HepG2 (cell line): ENCODE measurements at regions of chr18 and their contacts with region 1.

Region 1: GRCh38 chr18:24118750-24119577 is 19.9 kb upstream of the CABYR start:
- DNase-seq: peak; percentile 70
- ATAC-seq: peak; percentile 68
- H3K4me3 ChIP-seq: no peak overlapping the region
- H3K27ac ChIP-seq: no peak overlapping the region
- H3K4me1 ChIP-seq: peaks cover 24% of the 10 kb centered on the region
- H3K27me3 ChIP-seq: no peaks in the 10 kb centered on the region
- CTCF ChIP-seq: peak; percentile 84
- EP300 ChIP-seq: no peak
- POLR2A ChIP-seq: no peak
- RAD21 ChIP-seq: peak; percentile 81

Region 2: DNA sequence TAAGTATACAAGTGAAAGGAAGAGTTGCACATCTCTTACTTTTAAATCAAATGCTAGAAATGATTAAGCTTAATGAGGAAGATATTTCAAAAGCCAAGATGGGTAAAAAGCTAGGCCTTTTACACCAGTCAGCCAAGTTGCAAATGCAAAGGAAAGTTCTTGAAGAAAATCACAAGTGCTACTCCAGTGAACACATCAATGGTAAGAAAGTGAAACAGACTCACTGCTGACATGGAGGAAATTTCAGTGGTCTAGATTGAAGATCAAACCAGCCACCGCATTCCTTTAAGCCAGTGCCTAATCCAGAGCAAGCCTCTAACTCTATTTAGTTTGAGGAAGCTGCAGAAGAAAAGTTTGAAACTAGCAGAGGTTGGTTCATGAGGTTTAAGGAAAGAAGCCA is 1106.7 kb before region 1 on chr18:
- CTCF ChIA-PET with region 1: no interaction called
- POLR2A ChIA-PET with region 1: no interaction called
- in situ Hi-C with region 1: no loop called
- intact Hi-C with region 1: no loop called
- DNase-seq: no peak
- ATAC-seq: no peak
- H3K4me3 ChIP-seq: no peak overlapping the region
- H3K27ac ChIP-seq: no peak overlapping the region
- H3K4me1 ChIP-seq: no peaks in the 10 kb centered on the region
- H3K27me3 ChIP-seq: no peaks in the 10 kb centered on the region; a peak in 1 of 5 replicates
- CTCF ChIP-seq: no peak
- EP300 ChIP-seq: no peak
- POLR2A ChIP-seq: no peak
- RAD21 ChIP-seq: no peak

Region 3: DNA sequence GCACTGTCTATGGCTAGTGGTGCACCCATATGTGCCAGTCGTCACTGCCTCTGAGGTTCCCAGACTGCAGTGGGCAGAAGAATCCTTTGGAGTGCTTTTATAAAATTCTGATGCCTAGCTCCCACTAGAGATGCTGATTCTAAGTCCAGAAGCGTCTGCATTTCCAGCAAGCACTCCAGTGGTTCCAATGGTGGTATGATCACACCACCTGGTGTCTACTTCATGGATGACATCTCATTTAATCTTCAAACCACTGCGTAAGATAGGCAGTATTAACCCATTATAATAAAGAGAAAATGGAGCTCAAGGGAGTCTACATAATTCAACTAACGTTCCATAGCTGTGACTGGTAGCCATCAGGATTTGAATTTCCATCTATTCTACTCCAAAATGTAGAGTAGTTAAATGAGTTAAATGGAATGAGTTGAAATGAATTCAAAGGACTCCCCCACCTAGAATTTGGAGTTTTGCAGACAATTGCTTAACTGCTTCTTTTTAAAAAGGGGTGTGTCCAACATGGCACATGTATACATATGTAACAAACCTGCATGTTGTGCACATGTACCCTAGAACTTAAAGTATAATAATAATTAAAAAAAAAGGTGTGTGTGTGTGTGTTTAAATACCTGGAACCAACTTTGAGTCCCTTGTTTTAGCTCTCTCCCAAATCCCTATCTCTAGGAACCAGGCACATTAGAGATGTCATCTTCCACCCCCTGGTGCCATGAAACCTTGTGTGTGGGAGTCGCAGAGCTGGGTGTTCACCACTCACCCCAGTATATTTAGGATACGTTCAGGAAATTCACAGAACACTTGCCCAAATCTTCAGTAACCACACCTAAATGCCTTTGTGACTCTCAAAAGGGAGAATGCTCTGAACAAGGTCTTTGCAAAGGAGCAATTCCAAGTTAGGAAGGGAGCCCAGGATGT is 415.6 kb before region 1 on chr18:
- CTCF ChIA-PET with region 1: no interaction called
- POLR2A ChIA-PET with region 1: no interaction called
- in situ Hi-C with region 1: no loop called
- intact Hi-C with region 1: loop called (anchors 5 kb)
- DNase-seq: peak; percentile 50
- ATAC-seq: peak; percentile 89
- H3K4me3 ChIP-seq: no peak overlapping the region
- H3K27ac ChIP-seq: no peak overlapping the region
- H3K4me1 ChIP-seq: no peaks in the 10 kb centered on the region
- H3K27me3 ChIP-seq: peaks cover 2 to 7% of the 10 kb centered on the region in 2 experiments; a peak in 3 of 5 replicates
- CTCF ChIP-seq: peak; percentile 75
- EP300 ChIP-seq: no peak
- POLR2A ChIP-seq: no peak
- RAD21 ChIP-seq: peak; percentile 71; the same call in 1 of the 2 replicates

Region 4: GRCh38 chr18:23918401-23919032 is 200.4 kb before region 1 on chr18:
- CTCF ChIA-PET with region 1: interaction called, 11 read pairs
- POLR2A ChIA-PET with region 1: no interaction called
- in situ Hi-C with region 1: no loop called
- intact Hi-C with region 1: loop called (anchors 5 kb)
- DNase-seq: peak; percentile 55
- ATAC-seq: peak; percentile 84
- H3K4me3 ChIP-seq: no peak overlapping the region
- H3K27ac ChIP-seq: no peak overlapping the region
- H3K4me1 ChIP-seq: no peaks in the 10 kb centered on the region
- H3K27me3 ChIP-seq: no peaks in the 10 kb centered on the region; a peak in 1 of 5 replicates
- CTCF ChIP-seq: peak; percentile 83
- EP300 ChIP-seq: no peak
- POLR2A ChIP-seq: no peak
- RAD21 ChIP-seq: peak; percentile 57; the same call in 1 of the 2 replicates

Region 5: DNA sequence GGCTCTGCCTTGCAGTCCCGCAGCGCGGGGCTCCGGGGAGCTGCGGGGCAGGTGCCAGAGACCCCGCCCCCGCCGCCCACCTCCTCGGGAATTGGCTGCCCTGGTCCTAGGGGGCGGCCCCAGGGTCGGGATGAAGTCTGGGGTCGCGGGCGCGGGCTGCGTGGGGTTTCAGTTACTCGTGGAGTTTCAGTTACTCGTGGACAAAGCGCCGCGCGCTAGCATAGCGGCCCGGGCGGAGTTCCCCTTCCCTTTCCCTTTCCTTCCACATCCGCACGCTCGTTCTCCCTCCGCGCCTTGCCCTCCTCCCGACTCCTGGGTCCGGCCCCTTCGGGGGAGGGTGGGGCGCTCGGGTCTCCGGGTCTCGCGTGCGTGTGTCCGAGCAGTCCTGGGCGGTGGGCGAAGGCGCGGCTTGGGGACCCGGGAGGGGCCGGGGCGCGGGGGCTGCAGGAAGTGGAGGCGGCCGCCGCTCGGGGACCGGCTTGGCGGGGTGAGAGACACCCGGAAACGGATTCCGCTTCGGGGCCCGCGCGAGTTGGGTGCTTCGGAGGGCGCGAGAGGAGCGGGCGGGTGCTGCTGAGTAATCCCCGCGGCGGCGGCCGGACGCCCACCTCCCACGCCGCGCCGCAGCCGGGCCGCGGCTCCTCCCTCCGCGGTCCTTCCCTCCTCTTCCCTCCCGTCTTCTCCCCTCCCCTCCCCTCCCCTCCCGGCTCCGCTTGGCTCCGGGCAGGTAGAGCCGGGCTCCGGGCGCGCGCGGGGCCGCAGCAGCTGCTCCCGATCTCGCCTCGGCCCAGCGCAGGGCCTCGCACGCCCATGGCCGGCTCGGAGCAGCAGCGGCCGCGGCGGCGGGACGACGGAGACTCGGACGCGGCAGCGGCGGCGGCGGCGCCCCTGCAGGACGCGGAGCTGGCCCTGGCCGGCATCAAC is 104.6 kb before region 1 on chr18 and contains the start of gene TTC39C:
- CTCF ChIA-PET with region 1: no interaction called
- POLR2A ChIA-PET with region 1: interaction called, 10 read pairs
- in situ Hi-C with region 1: no loop called
- intact Hi-C with region 1: loop called (anchors 1 kb)
- DNase-seq: no peak
- ATAC-seq: peak; percentile 77
- H3K4me3 ChIP-seq: peak within 1 kb of the TSS; percentile 52 to 79 (median 77)
- H3K27ac ChIP-seq: peak within 1 kb of the TSS; percentile 19
- H3K4me1 ChIP-seq: peaks cover 23% of the 10 kb centered on the region
- H3K27me3 ChIP-seq: peaks cover 0 to 35% of the 10 kb centered on the region in 2 experiments; a peak in 3 of 5 replicates
- CTCF ChIP-seq: no peak
- EP300 ChIP-seq: no peak
- POLR2A ChIP-seq: no peak
- RAD21 ChIP-seq: no peak
- total RNA-seq, gene TTC39C: 25.9 and 28.1 TPM in 2 replicates

Region 6: DNA sequence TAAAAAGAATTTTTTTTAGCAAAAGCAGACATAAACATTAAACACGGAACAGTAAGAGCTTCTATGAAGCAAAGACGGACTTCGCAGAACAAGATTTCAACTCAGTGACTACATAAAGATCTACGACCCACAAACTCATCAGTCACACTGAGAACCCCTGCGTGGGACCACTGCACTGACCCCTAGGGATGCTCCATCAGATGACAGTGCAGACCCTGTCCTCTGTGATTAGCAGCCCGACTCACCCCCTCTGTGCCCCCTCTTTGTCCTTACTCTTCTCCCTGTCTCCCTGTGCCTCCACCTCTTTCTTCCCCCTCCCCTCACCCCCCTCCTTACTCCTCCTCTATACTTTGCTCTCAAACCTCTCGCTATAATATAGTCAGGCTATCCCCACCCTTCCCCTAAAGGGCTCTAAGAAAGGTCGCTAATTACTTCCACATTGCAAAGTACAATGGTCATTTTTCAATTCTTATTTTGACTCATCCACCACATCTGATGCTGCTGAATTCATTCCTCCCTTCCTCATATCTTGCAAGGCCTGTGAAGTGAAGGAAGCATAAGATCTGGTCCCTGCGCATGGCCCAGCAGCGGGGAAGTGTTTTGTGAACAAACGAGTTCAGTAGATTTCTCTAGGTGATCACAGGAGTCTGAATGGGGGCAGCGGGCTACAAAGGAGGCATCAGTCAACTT is 109.2 kb after region 1 on chr18:
- CTCF ChIA-PET with region 1: no interaction called
- POLR2A ChIA-PET with region 1: no interaction called
- in situ Hi-C with region 1: no loop called
- intact Hi-C with region 1: no loop called
- DNase-seq: no peak
- ATAC-seq: no peak
- H3K4me3 ChIP-seq: no peak overlapping the region
- H3K27ac ChIP-seq: no peak overlapping the region
- H3K4me1 ChIP-seq: no peaks in the 10 kb centered on the region
- H3K27me3 ChIP-seq: no peaks in the 10 kb centered on the region; a peak in 1 of 5 replicates
- CTCF ChIP-seq: no peak
- EP300 ChIP-seq: no peak
- POLR2A ChIP-seq: no peak
- RAD21 ChIP-seq: no peak